SK-N-SH (cell line): ENCODE measurements at regions of chr7 and their contacts with region 1.

Region 1: GRCh38 chr7:151123822-151124464 is 37.7 kb downstream of the AGAP3 start:
- DNase-seq: peak; percentile 98
- H3K4me3 ChIP-seq: no peak overlapping the region; a peak in 1 of 4 replicates
- H3K27ac ChIP-seq: no peak overlapping the region
- H3K4me1 ChIP-seq: no peaks in the 10 kb centered on the region; a peak in 1 of 4 replicates
- H3K27me3 ChIP-seq: no peaks in the 10 kb centered on the region
- CTCF ChIP-seq: peak; percentile 100
- EP300 ChIP-seq: no peak
- RAD21 ChIP-seq: peak; percentile 98

Region 2: DNA sequence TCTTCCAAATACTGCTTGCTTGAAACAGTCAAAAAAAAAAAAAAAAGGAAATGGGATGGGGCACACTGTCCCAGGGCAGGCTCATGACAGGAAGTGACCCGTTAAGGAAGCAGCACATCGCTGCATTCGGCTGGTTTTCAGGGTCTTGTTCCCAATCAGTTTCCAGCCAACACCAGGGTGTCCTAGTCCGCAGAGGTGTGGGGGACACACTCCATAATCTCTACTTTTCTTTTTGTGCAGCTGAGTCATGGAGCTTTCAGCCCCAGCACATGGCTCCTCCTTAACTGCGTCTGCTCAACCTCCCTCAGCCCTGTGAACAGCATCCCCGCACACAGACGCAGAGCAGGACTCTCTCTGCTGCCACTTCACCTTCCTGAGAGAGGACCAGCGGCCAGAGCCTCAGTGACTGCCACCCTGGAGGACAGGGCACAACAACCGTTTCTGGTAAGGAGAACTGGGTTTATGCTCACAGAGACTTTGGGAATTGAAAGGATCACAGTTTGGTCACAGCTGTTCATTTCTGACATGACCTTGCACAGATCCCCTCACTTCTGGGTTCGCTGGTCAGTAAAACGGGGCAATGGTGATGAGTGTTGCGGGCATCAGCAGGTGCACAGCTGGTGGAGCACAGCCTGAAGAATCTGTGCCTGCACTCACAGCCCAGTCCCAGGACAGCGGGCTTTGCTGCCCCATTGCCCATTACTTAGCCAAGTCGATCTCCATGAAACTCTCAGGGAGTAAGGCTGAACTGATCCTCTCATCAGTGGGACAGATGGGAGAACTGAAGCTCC is 386.5 kb before region 1 on chr7 and contains the start of gene GIMAP5:
- CTCF ChIA-PET with region 1: no interaction called
- POLR2A ChIA-PET with region 1: no interaction called
- DNase-seq: no peak
- H3K4me3 ChIP-seq: no peak within 1 kb of the TSS
- H3K27ac ChIP-seq: no peak within 1 kb of the TSS
- H3K4me1 ChIP-seq: peaks cover 0 to 2% of the 10 kb centered on the region in 2 experiments; a peak in 1 of 4 replicates
- H3K27me3 ChIP-seq: no peaks in the 10 kb centered on the region; the same call in 1 of the 2 replicates
- CTCF ChIP-seq: no peak
- EP300 ChIP-seq: no peak
- RAD21 ChIP-seq: no peak
- polyA plus RNA-seq, gene GIMAP5: not detected in 2 replicates

Region 3: GRCh38 chr7:151143261-151144015 is 19.5 kb after region 1 on chr7:
- CTCF ChIA-PET with region 1: interaction called, 28 read pairs
- POLR2A ChIA-PET with region 1: no interaction called
- DNase-seq: no peak
- H3K4me3 ChIP-seq: no peak overlapping the region
- H3K27ac ChIP-seq: no peak overlapping the region
- H3K4me1 ChIP-seq: peaks cover 0 to 12% of the 10 kb centered on the region in 2 experiments; a peak in 1 of 4 replicates
- H3K27me3 ChIP-seq: no peaks in the 10 kb centered on the region
- CTCF ChIP-seq: no peak
- EP300 ChIP-seq: no peak
- RAD21 ChIP-seq: no peak

Region 4: DNA sequence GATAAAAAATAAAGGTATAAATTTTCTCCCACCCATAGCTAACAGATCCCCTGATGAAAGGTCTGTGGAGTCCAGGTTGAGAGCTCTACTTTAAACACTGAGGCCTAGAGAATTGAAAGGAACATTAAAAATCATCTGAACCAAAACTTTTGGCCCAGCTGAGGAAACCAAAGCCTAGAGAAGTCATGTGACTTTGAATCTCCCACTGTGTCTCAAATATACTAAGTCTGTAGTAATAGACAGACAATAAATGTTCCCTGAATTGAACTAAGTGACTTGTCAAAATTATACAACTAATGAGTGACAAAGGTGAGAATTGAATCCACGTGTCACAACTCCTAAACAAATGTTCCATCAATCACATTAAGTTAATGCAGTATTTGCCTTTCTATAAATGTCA is 37.8 kb after region 1 on chr7:
- CTCF ChIA-PET with region 1: interaction called, 243 read pairs
- POLR2A ChIA-PET with region 1: no interaction called
- DNase-seq: no peak
- H3K4me3 ChIP-seq: no peak overlapping the region
- H3K27ac ChIP-seq: no peak overlapping the region
- H3K4me1 ChIP-seq: peaks cover 0 to under 1% of the 10 kb centered on the region in 2 experiments; a peak in 1 of 4 replicates
- H3K27me3 ChIP-seq: peaks cover 42% of the 10 kb centered on the region
- CTCF ChIP-seq: no peak
- EP300 ChIP-seq: no peak
- RAD21 ChIP-seq: no peak

Region 5: DNA sequence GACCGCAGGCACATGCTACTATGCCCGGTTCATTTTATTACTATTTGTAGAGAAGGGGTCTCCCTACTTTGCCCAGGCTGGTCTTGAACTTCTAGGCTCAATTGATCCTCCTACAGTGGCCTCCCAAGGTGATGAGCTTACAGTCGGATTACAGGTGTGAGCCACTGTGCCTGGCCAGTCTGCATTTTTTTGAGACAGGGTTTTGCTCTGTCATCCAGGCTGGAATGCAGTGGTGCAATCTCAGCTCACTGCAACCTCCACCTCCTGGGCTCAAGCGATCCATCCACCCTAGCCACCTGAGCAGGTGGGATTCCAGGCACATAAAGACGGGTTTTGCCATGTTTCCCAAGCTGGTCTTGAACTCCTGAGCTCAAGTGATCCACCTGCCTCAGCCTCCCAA is 88.7 kb after region 1 on chr7:
- CTCF ChIA-PET with region 1: interaction called, 11 read pairs
- POLR2A ChIA-PET with region 1: no interaction called
- DNase-seq: no peak
- H3K4me3 ChIP-seq: no peak overlapping the region
- H3K27ac ChIP-seq: no peak overlapping the region
- H3K4me1 ChIP-seq: no peaks in the 10 kb centered on the region
- H3K27me3 ChIP-seq: 0 out of 2 replicates have a peak, but pooled peaks cover under 1% of the 10 kb centered on the region
- CTCF ChIP-seq: no peak
- EP300 ChIP-seq: no peak
- RAD21 ChIP-seq: no peak

Region 6: DNA sequence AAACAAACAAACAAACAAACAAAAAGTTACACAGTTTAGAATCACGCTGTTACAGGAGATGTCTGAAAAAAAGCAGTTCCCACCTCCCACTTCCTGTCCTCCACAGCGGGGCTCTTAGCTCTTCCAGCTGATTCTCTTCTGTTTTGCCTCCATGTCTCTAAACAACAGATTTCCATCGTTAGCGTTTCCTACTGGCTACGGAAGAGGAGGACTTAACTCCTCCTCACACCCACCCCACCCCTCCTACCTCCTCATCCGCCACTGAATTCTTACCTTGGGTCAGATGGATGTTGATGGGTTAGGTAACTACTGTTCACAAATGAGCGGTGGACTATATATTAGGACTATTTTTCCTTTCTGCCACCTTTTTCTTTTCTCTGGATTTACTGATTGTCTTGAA is 180.9 kb after region 1 on chr7:
- CTCF ChIA-PET with region 1: interaction called, 10 read pairs
- POLR2A ChIA-PET with region 1: no interaction called
- DNase-seq: no peak
- H3K4me3 ChIP-seq: no peak overlapping the region
- H3K27ac ChIP-seq: no peak overlapping the region
- H3K4me1 ChIP-seq: peaks cover 0 to 3% of the 10 kb centered on the region in 2 experiments; a peak in 1 of 4 replicates
- H3K27me3 ChIP-seq: peaks cover 38% of the 10 kb centered on the region
- CTCF ChIP-seq: no peak
- EP300 ChIP-seq: no peak
- RAD21 ChIP-seq: no peak